Thyroid gland (tissue), 4 donors: ENCODE measurements at regions of chr2 and their contacts with region 1.

Region 1: DNA sequence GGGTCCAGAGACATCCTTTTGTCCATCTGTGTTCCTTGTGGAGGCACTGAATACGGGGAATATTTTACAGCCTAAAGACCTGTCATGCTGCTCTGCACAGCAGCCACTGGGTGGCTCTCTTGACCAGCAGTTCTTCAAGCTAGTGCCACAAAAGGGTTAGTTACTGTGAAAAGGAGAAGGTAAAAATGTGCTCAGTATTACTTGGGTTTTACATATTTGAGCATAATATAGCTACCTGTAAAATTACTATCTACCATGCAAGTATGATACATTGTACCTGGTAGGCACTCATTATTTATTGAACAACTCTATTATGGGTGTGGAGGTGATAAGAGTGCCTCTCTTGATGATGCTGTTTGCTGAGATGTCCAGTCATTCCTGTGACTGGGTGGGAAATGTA is 23.6 kb downstream of the FZD5 start:
- DNase-seq: peak; percentile 57 to 73
- H3K4me3 ChIP-seq: no peak overlapping the region
- H3K27ac ChIP-seq: peak overlapping the region in 1 of 3 donors; percentile 33
- H3K4me1 ChIP-seq: peaks cover 6 to 34% of the 10 kb centered on the region in 2 donors
- H3K27me3 ChIP-seq: no peaks in the 10 kb centered on the region
- CTCF ChIP-seq: peak; percentile 73 to 96 (median 87)
- POLR2A ChIP-seq: no peak

Region 2: GRCh38 chr2:207662203-207662602 is 83.9 kb before region 1 on chr2:
- intact Hi-C with region 1: no loop called
- DNase-seq: no peak
- H3K4me3 ChIP-seq: no peak overlapping the region
- H3K27ac ChIP-seq: no peak overlapping the region
- H3K4me1 ChIP-seq: no peaks in the 10 kb centered on the region
- H3K27me3 ChIP-seq: no peaks in the 10 kb centered on the region
- CTCF ChIP-seq: no peak
- POLR2A ChIP-seq: no peak

Region 3: DNA sequence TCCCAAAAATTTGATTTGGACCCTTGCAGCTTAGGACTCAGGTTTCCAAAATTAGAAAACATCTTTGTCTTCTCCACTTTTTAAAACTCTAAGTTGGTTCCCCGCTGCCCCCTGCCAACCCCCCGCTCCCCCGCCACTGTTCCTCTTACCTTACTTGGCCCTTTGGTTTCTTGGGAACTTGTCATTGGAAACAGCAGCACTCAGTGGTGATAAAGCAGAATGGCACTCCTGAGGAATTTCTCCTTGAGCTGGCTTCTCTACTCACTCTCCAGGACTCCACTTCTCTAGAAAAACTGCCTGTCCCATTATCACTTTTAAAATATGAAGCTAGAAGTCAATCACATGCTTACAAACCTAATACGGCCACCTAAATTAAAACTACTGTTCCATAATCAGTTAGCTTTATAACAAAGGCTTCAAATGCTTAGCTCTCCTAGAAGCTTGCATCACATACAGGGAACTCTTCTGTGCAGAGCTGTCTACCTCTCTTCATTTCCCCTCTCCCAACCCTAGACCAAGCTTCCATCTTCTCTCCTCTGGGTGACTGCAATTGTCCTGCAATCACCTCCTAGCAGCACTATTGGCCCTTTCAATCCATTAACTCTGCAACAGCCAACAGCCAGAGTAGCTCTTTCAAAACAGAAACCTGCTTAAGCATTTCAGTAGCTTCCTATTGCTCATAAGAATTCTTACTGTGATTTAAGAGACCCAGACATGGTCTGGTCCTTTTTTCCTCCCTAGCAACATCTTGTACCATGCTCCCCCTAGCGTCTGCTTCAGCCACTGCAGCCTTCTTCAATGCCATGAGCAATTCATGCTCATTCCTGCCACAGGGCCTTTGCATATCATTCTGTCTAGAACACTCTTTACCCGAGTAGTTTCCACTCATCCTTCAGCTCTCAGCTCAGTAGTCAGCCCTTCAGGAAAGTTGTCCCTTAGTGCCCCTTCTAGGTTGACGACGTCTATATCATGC is 294.4 kb after region 1 on chr2:
- intact Hi-C with region 1: loop called (anchors 5 kb)
- DNase-seq: peak; percentile 70 to 79
- H3K4me3 ChIP-seq: no peak overlapping the region
- H3K27ac ChIP-seq: peak overlapping the region; percentile 56 to 65 (median 65)
- H3K4me1 ChIP-seq: peaks cover 6 to 17% of the 10 kb centered on the region in 2 donors
- H3K27me3 ChIP-seq: no peaks in the 10 kb centered on the region
- CTCF ChIP-seq: peak; percentile 23 to 77 (median 63)
- POLR2A ChIP-seq: no peak

Region 4: GRCh38 chr2:208072250-208072892 is 326.2 kb after region 1 on chr2:
- intact Hi-C with region 1: loop called (anchors 10 kb)
- DNase-seq: peak; percentile 65 to 74
- H3K4me3 ChIP-seq: no peak overlapping the region
- H3K27ac ChIP-seq: no peak overlapping the region
- H3K4me1 ChIP-seq: peaks cover 0 to 4% of the 10 kb centered on the region in 2 donors
- H3K27me3 ChIP-seq: no peaks in the 10 kb centered on the region
- CTCF ChIP-seq: peak; percentile 27 to 82 (median 76)
- POLR2A ChIP-seq: no peak